A673 (cell line): ENCODE measurements at regions of chr2 and their contacts with region 1.

Region 1: GRCh38 chr2:39175026-39175812 is 54.4 kb upstream of the SOS1 start:
- DNase-seq: no peak
- H3K4me3 ChIP-seq: no peak overlapping the region
- H3K27ac ChIP-seq: no peak overlapping the region
- H3K4me1 ChIP-seq: no peaks in the 10 kb centered on the region
- H3K27me3 ChIP-seq: no peaks in the 10 kb centered on the region
- CTCF ChIP-seq: no peak

Region 2: DNA sequence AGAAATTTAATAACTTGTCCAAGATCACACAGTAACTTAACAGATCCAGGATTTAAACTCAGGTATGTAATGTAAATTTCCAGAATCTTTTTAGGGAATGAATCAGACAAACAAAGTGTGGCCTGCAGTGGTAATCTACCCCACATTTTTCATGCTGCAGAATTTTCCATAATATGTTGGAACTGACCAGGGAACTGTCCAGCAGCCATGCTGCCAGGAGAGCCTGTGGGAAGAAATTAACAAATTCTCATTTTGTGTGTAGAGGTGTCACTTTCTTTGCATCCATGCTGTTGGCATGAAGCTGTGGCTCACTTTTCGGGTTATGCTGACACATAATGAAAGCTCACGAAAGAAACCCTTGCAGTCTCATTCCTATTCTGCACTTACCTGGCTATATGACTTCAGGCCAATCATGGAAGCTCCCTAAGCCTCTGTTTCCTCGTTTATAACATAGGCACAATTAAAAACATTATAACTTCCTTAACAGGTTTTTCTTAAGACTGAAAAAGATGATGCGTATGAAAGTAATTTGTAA is 13.8 kb after region 1 on chr2:
- CTCF ChIA-PET with region 1: no interaction called
- POLR2A ChIA-PET with region 1: no interaction called
- intact Hi-C with region 1: loop called (anchors 1 kb)
- DNase-seq: no peak
- H3K4me3 ChIP-seq: no peak overlapping the region
- H3K27ac ChIP-seq: no peak overlapping the region
- H3K4me1 ChIP-seq: no peaks in the 10 kb centered on the region
- H3K27me3 ChIP-seq: no peaks in the 10 kb centered on the region
- CTCF ChIP-seq: no peak